ENCODE measurements at regions of chr20 and their contacts with region 1.

Region 1: DNA sequence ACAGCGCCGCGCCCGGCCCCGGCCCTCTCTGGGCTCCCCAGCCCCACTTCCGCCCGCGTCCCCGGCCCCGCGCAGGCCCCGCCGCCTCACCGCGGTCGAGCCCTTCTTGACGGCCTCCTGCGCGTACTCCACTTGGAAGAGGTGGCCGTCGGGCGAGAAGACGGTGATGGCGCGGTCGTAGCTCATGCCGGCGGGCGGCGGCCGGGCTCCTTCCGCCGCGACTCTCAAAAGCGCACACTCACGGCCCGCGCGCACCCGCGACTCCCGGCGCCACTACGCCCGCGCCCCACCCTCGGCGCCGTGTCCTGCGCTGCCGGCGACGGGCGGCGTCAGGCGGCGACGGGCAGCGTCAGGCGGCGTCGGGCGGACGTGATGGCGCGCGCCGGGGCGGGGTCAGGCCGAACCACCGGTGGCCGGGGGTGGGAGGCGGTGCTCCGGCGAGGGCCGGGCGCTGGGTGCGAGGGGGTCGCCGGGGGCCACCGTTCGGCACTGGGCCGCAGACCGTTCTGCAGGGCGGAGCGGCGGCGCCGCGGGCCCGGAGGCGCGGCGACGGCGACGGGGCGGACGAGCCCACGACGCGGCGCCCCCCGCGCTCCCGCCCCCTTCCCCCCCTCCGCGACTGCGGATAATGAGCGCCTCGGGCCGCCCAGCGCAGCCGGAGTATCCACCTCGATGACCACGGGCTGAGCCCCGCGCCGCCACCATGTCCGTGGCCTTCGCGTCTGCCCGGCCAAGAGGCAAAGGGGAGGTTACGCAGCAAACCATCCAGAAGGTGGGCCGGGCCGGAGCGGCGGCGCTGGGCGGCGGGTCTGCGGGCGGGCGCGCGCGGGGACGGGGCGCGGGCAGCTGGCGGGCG is at the starts of genes PSMA7 and SS18L1:
- DNase-seq: peak; percentile 89
- H3K4me3 ChIP-seq: peak within 1 kb of the TSS; percentile 89 to 98 (median 94)
- H3K27ac ChIP-seq: peak within 1 kb of the TSS; percentile 93 to 97 (median 95)
- H3K4me1 ChIP-seq: peaks cover 22 to 33% (median 27%) of the 10 kb centered on the region in 4 donors
- H3K27me3 ChIP-seq: no peaks in the 10 kb centered on the region
- CTCF ChIP-seq: no peak
- EP300 ChIP-seq: no peak
- POLR2A ChIP-seq: peak; percentile 81
- total RNA-seq, gene PSMA7: 154 to 241 (median 234) TPM
- total RNA-seq, gene SS18L1: 14.7 to 23.2 (median 22.1) TPM

Region 2: DNA sequence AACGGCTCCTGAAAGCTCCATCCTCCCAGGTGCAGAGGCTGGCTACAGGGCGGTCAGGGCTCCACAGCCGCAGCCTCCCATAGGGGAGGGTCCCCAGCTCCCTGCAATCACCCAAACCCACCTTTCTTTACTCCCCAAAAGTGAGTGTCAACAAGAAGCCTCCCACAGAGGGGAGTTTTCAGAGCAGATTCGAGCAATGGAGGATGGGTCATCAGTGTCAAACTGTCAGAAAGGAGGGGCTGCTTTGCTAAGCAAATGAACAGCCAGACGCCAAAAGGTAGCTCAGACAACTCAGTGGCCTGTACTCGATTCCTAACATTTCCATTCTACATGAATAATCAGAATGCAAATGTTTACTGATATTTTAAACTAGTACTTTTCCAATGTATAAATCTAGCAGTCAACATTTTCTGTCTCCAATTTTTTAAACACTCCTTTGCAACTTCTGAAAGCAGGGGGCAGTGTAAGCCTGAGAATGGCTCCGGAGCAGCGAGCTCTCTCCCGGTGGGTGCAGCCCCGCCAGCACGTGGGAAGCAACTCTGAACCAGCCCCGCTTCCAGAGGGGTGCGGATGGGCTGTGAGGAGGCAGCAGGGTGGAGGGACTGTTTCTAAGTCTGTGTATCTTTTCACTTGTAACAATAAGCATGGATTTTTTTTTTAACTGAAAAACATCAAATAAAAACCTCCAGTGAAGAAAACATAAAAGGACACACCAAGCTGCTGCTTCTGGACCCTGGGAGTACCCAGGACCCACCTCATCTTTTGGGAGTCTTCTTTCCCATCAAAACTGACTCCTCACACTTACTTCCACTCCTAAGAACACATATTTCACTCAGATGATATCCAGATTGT is 132.6 kb before region 1 on chr20:
- in situ Hi-C with region 1: loop called in 2 of 4 experiments (anchors 5 to 10 kb)
- intact Hi-C with region 1: no loop called
- DNase-seq: peak; percentile 53
- H3K4me3 ChIP-seq: no peak overlapping the region
- H3K27ac ChIP-seq: no peak overlapping the region
- H3K4me1 ChIP-seq: peaks cover 0 to 4% (median 0%) of the 10 kb centered on the region in 4 donors
- H3K27me3 ChIP-seq: no peaks in the 10 kb centered on the region
- CTCF ChIP-seq: peak; percentile 56 to 73 (median 63)
- EP300 ChIP-seq: no peak
- POLR2A ChIP-seq: no peak

Region 3: DNA sequence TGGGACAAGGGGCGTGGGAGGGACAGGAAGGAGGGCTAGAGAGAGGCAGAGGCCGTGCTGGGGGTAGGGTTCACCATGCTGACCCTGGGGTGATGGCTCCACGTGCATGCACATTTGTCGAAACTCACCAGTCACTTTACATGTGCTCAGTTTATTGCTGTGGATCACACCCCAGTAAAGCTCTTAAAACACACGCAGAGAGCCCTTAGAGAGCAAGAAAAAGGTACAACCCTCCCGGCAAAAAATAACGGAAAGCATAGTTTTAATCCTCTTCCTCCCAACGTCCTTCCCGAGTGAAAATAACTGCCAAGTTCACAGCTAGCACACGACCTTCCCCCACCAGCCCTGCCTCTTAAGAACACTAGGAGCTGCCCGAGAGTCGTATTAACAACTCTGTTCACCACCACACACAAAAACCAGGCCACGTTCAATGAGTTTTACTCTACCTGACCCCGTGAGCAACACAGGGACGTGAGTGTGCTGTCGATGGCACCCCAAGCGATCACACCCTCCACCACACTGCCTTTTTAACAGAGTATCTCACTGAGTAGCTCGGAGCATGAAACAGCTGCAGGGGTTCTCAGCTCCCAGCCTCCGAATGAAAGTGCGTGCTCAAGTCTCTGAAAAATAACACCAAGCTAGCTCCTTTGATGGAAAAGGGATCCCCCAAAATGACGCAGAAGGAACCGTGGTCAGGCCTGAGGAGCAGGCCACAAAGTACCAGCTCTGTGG is 117.3 kb before region 1 on chr20:
- in situ Hi-C with region 1: loop called in 1 of 4 experiments (anchors 10 kb)
- intact Hi-C with region 1: loop called (anchors 5 kb)
- DNase-seq: no peak
- H3K4me3 ChIP-seq: no peak overlapping the region
- H3K27ac ChIP-seq: no peak overlapping the region
- H3K4me1 ChIP-seq: peaks cover 2 to 20% (median 9%) of the 10 kb centered on the region in 4 donors
- H3K27me3 ChIP-seq: no peaks in the 10 kb centered on the region
- CTCF ChIP-seq: peak; percentile 16 to 37 (median 30)
- EP300 ChIP-seq: no peak
- POLR2A ChIP-seq: no peak

Measured in transverse colon (tissue), 4 donors.